Dorsolateral prefrontal cortex (tissue), 120 donors: ENCODE measurements at regions of chr2 and their contacts with region 1.

Region 1: DNA sequence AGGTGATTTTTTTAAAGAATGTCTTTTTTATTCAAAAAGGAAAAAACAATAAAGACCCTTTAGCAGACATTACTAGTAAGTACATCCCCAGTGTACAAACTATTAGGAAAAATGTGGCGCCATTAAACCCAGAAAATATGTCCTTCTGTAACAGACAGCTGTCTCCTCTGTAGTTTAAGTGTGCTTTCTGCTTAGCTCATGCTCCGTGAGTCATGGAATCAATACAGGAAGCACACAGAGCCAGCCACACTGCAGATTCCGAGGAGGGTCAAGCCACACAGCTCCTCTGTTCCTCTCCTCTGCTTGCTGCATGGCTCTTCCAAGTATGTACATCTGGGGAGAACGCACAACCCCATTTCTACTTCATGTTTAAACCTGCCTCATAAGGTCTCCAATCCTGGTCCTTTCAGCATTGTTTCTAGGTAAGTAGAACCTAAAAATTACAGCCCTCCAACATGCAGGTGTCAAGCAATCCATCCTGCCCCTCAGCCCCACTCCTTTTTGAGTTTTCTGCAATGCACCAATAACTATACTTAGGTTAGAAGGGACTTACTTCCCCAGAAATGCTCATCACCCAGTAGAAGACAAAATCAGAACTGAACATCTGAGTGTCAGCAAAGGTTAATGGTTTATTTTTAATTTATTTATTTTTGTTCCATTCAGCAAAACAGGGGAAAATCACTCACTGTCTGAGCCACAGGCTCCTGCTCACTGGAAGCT is 37.5 kb downstream of the ACVR1 start:
- DNase-seq: peak in 1 of 10 donors; percentile 17
- H3K4me3 ChIP-seq: peak overlapping the region in 54 of 59 donors; percentile 0 to 65 (median 42)
- H3K27ac ChIP-seq: peak overlapping the region in 26 of 59 donors; percentile 0 to 73 (median 31)
- H3K27me3 ChIP-seq: no peaks in the 10 kb centered on the region
- CTCF ChIP-seq: no peak

Region 2: DNA sequence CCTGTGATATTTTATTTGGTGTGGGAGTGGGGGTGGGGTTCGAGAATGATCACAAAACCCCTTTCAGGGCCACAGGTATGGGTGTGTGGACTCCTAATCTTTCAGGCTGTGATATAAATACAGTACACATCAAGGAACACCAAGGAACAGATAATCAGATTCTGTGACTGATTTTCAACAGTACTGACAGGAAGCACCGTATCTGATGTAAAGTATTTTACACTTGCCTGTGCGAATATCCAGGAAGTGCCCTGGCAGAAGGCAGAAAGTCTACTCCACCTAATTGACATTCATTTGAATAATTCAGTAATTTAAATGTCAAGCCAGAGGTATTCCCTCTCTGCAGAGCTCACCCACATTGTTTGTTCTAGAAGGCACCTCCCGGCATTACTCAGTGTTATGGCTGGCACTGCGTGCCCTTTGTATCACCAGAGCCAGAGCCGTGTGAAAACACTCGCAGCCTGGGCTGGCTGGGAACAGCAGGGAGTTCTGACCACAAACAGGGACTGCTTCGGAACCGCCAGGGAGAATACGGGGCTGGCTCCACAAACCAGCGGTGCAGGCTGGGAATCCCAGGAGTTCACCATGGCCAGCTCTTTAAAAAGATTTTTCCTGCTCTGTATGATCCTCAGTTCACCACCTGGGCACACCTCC is 54.3 kb before region 1 on chr2:
- intact Hi-C with region 1: loop called in 1 of 2 experiments (anchors 5 kb)
- DNase-seq: peak in 8 of 10 donors; percentile 18 to 59 (median 38)
- H3K4me3 ChIP-seq: peak overlapping the region in 22 of 59 donors; percentile 4 to 52 (median 21)
- H3K27ac ChIP-seq: peak overlapping the region in 3 of 59 donors; percentile 6 to 31 (median 24)
- H3K27me3 ChIP-seq: no peaks in the 10 kb centered on the region
- CTCF ChIP-seq: no peak

Region 3: GRCh38 chr2:157922336-157922735 is 83.7 kb after region 1 on chr2:
- intact Hi-C with region 1: no loop called
- DNase-seq: peak in 1 of 10 donors; percentile 41
- H3K4me3 ChIP-seq: no peak overlapping the region
- H3K27ac ChIP-seq: no peak overlapping the region
- H3K27me3 ChIP-seq: no peaks in the 10 kb centered on the region
- CTCF ChIP-seq: no peak